Cardiac septum (tissue), 1 donor: ENCODE measurements at regions of chrX and their contacts with region 1.

Region 1: GRCh38 chrX:10189317-10190268 is 32.8 kb downstream of the CLCN4 start:
- DNase-seq: peak; percentile 88

Region 2: GRCh38 chrX:10615931-10616775 is 426.6 kb after region 1 on chrX:
- intact Hi-C with region 1: loop called (anchors 5 kb)
- DNase-seq: no peak

Region 3: DNA sequence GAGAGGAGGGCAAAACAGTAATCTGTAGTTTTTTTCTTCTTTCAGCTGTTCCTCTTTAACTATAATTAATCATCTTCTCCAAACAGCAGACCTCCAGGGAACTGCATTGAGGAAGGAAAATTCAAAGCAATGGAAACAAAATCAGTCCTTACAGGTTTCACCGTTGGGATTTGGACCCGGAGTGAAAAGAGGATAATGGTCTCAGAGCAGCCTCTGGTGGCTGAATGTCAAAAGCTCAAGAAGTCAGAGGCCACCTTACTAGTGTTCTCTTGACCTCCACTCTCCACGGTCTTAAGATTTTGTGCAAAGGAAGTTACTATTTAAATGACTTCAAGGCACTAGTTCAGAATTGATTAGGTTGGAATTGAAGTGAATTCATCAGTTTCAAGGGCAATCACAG is 446.7 kb after region 1 on chrX:
- intact Hi-C with region 1: loop called (anchors 5 kb)
- DNase-seq: no peak

Region 4: GRCh38 chrX:10722851-10723250 is 533.3 kb after region 1 on chrX:
- intact Hi-C with region 1: loop called (anchors 2 kb)
- DNase-seq: no peak

Region 5: DNA sequence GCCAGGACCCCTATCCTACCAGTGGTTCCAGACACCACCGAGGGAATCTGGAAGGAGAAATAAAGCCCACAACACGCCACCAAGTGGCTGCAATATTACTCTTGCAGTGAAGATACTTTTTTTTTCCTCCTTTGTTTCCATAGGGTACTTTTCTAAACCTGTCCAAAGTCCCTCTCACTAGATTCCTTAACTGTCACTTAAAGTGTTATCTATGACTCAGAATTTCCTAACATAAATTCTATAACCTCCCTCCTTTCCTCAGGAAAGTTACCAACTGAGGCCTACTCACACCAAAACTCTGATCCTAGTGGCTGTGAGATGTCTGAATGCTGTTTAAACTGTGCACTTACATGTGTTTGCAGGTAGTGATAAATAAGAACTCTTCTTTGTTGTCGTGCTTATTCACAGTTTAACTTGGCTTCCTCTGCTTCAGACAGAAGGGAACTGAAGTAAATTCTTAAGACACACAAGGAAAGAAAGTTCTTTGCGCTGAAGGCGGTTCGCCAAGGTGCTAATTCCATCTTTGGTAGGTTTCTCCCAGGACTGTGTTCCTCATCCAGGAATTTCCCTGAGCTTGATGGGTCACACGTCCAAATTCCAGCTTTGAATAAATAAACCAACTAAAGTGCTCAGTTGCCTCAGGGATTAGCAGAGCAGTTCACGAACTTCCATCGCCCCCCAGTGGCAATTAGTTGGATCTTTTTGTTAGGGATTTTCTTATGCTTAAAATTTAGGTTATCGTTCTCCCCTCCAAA is 910.9 kb after region 1 on chrX:
- intact Hi-C with region 1: loop called (anchors 5 kb)
- DNase-seq: no peak

Region 6: DNA sequence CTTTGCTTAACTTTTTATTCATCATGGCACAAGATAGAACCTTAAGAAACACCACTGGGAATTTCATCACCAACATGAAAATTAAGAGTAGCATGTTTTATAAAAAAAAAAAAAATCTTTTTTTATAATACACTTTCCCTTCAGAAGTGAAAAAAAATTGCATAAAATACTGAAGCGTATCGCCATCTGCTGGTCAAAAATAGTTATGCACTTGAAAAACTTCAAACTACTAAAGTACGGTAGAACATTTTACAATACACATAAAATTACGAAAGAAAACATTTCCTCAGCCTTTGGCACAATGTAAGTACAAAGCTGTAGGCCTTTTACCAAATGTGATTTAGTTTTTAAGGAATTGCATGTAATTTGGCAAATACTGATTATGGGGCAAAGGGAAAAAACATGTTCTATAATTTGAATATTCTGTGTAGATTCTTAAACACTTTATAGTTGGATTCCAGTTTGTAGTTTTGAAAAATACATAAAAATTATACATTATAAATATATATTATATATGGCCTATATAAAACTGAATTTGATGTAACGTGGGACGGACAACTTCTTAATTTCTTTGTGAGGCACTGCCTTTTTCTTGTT is 948.0 kb after region 1 on chrX:
- intact Hi-C with region 1: loop called (anchors 5 kb)
- DNase-seq: no peak